ENCODE measurements at regions of chr1 and their contacts with region 1.

Region 1: GRCh38 chr1:167533851-167534300 is 15.5 kb upstream of the CD247 start:
- DNase-seq: peak; percentile 54 to 73 (median 61)
- H3K4me3 ChIP-seq: no peak overlapping the region
- H3K27ac ChIP-seq: no peak overlapping the region
- H3K4me1 ChIP-seq: peaks cover 0 to 9% (median 1%) of the 10 kb centered on the region in 4 experiments
- H3K27me3 ChIP-seq: no peaks in the 10 kb centered on the region

Region 2: GRCh38 chr1:167066333-167067122 is 467.3 kb before region 1 on chr1:
- CTCF ChIA-PET with region 1: interaction called, 13 read pairs
- POLR2A ChIA-PET with region 1: no interaction called
- DNase-seq: peak; percentile 59 to 68 (median 67)
- H3K4me3 ChIP-seq: peak overlapping the region in 4 of 7 experiments; percentile 39 to 70 (median 54)
- H3K27ac ChIP-seq: no peak overlapping the region
- H3K4me1 ChIP-seq: peaks cover 0 to 5% (median 1%) of the 10 kb centered on the region in 4 experiments
- H3K27me3 ChIP-seq: no peaks in the 10 kb centered on the region

Region 3: GRCh38 chr1:167401260-167401873 is 132.5 kb before region 1 on chr1:
- CTCF ChIA-PET with region 1: interaction called, 34 read pairs
- POLR2A ChIA-PET with region 1: interaction called, 3 read pairs
- DNase-seq: peak; percentile 51 to 73 (median 69)
- H3K4me3 ChIP-seq: no peak overlapping the region
- H3K27ac ChIP-seq: no peak overlapping the region
- H3K4me1 ChIP-seq: no peaks in the 10 kb centered on the region
- H3K27me3 ChIP-seq: no peaks in the 10 kb centered on the region

Region 4: GRCh38 chr1:167442124-167442848 is 91.6 kb before region 1 on chr1:
- CTCF ChIA-PET with region 1: interaction called, 53 read pairs
- POLR2A ChIA-PET with region 1: no interaction called
- DNase-seq: peak; percentile 80 to 89 (median 87)
- H3K4me3 ChIP-seq: no peak overlapping the region
- H3K27ac ChIP-seq: no peak overlapping the region
- H3K4me1 ChIP-seq: peaks cover 5 to 24% (median 19%) of the 10 kb centered on the region in 4 experiments
- H3K27me3 ChIP-seq: peaks cover 0 to 10% (median 0%) of the 10 kb centered on the region in 5 experiments

Region 5: GRCh38 chr1:167454894-167455785 is 78.7 kb before region 1 on chr1:
- CTCF ChIA-PET with region 1: interaction called, 16 read pairs
- POLR2A ChIA-PET with region 1: no interaction called
- DNase-seq: peak; percentile 82 to 94 (median 91)
- H3K4me3 ChIP-seq: peak overlapping the region; percentile 58 to 92 (median 78)
- H3K27ac ChIP-seq: peak overlapping the region; percentile 61 to 82
- H3K4me1 ChIP-seq: peaks cover 3 to 29% (median 17%) of the 10 kb centered on the region in 4 experiments
- H3K27me3 ChIP-seq: no peaks in the 10 kb centered on the region

Region 6: GRCh38 chr1:167553136-167554027 is 19.5 kb after region 1 on chr1 and contains the start of gene CREG1:
- CTCF ChIA-PET with region 1: interaction called, 22 read pairs
- POLR2A ChIA-PET with region 1: no interaction called
- DNase-seq: peak; percentile 93 to 96 (median 96)
- H3K4me3 ChIP-seq: peak within 1 kb of the TSS; percentile 76 to 90 (median 84)
- H3K27ac ChIP-seq: peak within 1 kb of the TSS; percentile 40 to 96
- H3K4me1 ChIP-seq: peaks cover 41 to 63% (median 55%) of the 10 kb centered on the region in 4 experiments
- H3K27me3 ChIP-seq: no peaks in the 10 kb centered on the region

Region 7: GRCh38 chr1:168261390-168261789 is 727.5 kb after region 1 on chr1:
- CTCF ChIA-PET with region 1: no interaction called
- POLR2A ChIA-PET with region 1: no interaction called
- DNase-seq: no peak
- H3K4me3 ChIP-seq: no peak overlapping the region
- H3K27ac ChIP-seq: no peak overlapping the region
- H3K4me1 ChIP-seq: no peaks in the 10 kb centered on the region
- H3K27me3 ChIP-seq: no peaks in the 10 kb centered on the region

Measured in common myeloid progenitor, CD34-positive (primary cell).